ENCODE measurements at regions of chr3 and their contacts with region 1.

Region 1: DNA sequence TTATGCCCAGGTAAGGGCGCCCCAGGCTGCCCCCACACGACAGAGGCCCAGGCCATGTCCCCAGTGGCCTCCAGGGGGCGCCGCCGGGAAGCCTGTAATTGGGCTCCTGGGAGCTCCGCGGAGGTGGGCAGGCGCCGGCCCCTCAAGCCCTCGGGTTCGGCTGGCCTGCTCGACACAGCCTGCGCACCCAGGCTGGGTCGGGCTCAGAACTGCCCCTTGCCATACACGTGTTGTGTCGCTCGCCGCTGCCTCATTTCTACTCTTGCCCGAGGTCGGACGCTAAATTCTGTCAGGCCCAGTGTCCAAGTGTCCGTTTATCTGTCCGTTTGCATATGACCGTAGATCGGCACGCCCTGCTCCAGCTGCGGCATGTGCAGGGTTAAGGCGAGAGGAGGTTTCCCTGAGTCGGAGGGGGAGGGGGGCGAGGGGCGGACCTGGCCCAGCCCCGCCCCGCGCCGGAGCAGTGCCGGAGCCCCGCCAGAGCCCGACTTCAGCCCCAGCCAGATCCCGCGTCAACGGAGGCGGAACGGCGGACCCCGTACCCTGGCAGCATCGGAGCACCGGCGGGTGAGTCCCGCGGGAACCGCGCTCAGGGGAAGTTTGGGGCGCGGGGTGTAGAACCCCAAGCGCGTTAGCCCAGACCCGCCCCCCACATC is at the start of gene KLHDC8B:
- DNase-seq: peak; percentile 90 to 93
- ATAC-seq: peak; percentile 87 to 91 (median 91)
- H3K4me3 ChIP-seq: peak within 1 kb of the TSS; percentile 88
- H3K27ac ChIP-seq: peak within 1 kb of the TSS; percentile 89
- H3K4me1 ChIP-seq: peaks cover 32% of the 10 kb centered on the region
- H3K27me3 ChIP-seq: no peaks in the 10 kb centered on the region
- CTCF ChIP-seq: peak; percentile 97
- total RNA-seq, gene KLHDC8B: 24.7 to 84.5 (median 29.2) TPM

Region 2: GRCh38 chr3:49217688-49218470 is 46.6 kb after region 1 on chr3:
- intact Hi-C with region 1: loop called in 1 of 2 experiments (anchors 2 kb)
- DNase-seq: peak in 1 of 2 donors; percentile 35
- ATAC-seq: peak; percentile 71 to 89 (median 82)
- H3K4me3 ChIP-seq: peak overlapping the region; percentile 19
- H3K27ac ChIP-seq: peak overlapping the region; percentile 83
- H3K4me1 ChIP-seq: peaks cover 24% of the 10 kb centered on the region
- H3K27me3 ChIP-seq: no peaks in the 10 kb centered on the region
- CTCF ChIP-seq: no peak

Region 3: GRCh38 chr3:49276475-49277382 is 105.5 kb after region 1 on chr3 and contains the start of gene C3orf62:
- intact Hi-C with region 1: loop called in 1 of 2 experiments (anchors 5 kb)
- DNase-seq: peak; percentile 92 to 95
- ATAC-seq: peak; percentile 91 to 95 (median 92)
- H3K4me3 ChIP-seq: peak within 1 kb of the TSS; percentile 72
- H3K27ac ChIP-seq: peak within 1 kb of the TSS; percentile 94
- H3K4me1 ChIP-seq: peaks cover 22% of the 10 kb centered on the region
- H3K27me3 ChIP-seq: no peaks in the 10 kb centered on the region
- CTCF ChIP-seq: no peak
- total RNA-seq, gene C3orf62: 1.7 to 2.0 (median 1.9) TPM

Region 4: GRCh38 chr3:49339945-49340800 is 168.9 kb after region 1 on chr3 and contains the start of gene USP4:
- intact Hi-C with region 1: loop called in 1 of 2 experiments (anchors 5 kb)
- DNase-seq: peak; percentile 90 to 94
- ATAC-seq: peak; percentile 94 to 97 (median 94)
- H3K4me3 ChIP-seq: peak within 1 kb of the TSS; percentile 98
- H3K27ac ChIP-seq: peak within 1 kb of the TSS; percentile 92
- H3K4me1 ChIP-seq: peaks cover 15% of the 10 kb centered on the region
- H3K27me3 ChIP-seq: no peaks in the 10 kb centered on the region
- CTCF ChIP-seq: peak; percentile 22
- total RNA-seq, gene USP4: 26.7 to 35.2 (median 31.1) TPM

Region 5: GRCh38 chr3:49445381-49445780 is 274.1 kb after region 1 on chr3:
- intact Hi-C with region 1: loop called (anchors 5 kb)
- DNase-seq: no peak
- ATAC-seq: no peak
- H3K4me3 ChIP-seq: no peak overlapping the region
- H3K27ac ChIP-seq: no peak overlapping the region
- H3K4me1 ChIP-seq: peaks cover 10% of the 10 kb centered on the region
- H3K27me3 ChIP-seq: no peaks in the 10 kb centered on the region
- CTCF ChIP-seq: no peak